Activated CD4-positive, alpha-beta memory T cell treated with anti-CD3 and anti-CD28 coated beads for 36 hours (primary cell): ENCODE measurements at regions of chr12 and their contacts with region 1.

Region 1: DNA sequence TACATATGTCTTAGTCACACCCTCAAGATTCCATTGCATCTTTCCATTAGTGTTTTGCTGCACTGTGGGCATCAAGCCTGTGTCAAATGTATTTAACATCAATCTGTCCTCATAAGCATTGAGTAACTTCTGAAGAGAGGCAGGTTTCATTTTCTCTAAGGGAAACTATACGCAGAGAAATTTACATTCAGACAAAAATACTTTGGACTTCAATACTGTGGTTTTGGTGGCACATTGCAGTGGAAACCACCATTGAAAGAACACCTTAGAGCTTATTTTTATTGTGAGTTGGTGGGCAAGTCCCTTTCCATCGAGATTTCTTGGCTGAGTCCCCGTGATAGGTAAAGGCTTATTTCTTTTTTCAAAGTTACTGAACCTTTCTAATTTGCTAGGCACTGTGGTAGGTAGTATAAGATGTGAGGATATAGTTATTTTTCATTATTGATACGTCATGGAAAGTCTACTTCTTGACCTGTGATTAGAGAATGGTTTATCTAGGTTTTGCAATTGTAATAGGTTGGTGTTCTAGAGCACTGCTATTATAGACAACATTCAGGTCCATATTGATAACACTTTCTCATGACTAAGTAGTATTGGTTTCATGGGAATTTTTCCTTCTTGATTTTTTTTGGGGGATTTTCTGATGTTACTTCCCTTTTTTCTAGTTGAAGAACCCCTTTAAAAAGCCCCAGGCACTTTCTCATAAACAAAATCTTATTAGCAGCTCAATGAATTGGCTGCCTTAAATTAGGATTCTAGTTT is 81.9 kb downstream of the CFAP54 start:
- DNase-seq: peak; percentile 33
- H3K4me3 Mint-ChIP-seq: peak overlapping the region; percentile 40
- H3K27ac Mint-ChIP-seq: peak overlapping the region; percentile 65
- H3K4me1 Mint-ChIP-seq: peaks cover 26% of the 10 kb centered on the region
- H3K27me3 Mint-ChIP-seq: peaks cover 4% of the 10 kb centered on the region

Region 2: GRCh38 chr12:96534339-96534738 is 36.9 kb before region 1 on chr12:
- CTCF ChIA-PET with region 1: no interaction called
- POLR2A ChIA-PET with region 1: no interaction called
- intact Hi-C with region 1: no loop called
- DNase-seq: no peak
- H3K4me3 Mint-ChIP-seq: no peak overlapping the region
- H3K27ac Mint-ChIP-seq: no peak overlapping the region
- H3K4me1 Mint-ChIP-seq: no peaks in the 10 kb centered on the region
- H3K27me3 Mint-ChIP-seq: no peaks in the 10 kb centered on the region

Region 3: GRCh38 chr12:98352218-98352811 is 1781.0 kb after region 1 on chr12:
- CTCF ChIA-PET with region 1: no interaction called
- POLR2A ChIA-PET with region 1: no interaction called
- intact Hi-C with region 1: loop called (anchors 1 kb)
- DNase-seq: peak; percentile 26
- H3K4me3 Mint-ChIP-seq: no peak overlapping the region
- H3K27ac Mint-ChIP-seq: no peak overlapping the region
- H3K4me1 Mint-ChIP-seq: peaks cover 18% of the 10 kb centered on the region
- H3K27me3 Mint-ChIP-seq: peaks cover 5% of the 10 kb centered on the region